ENCODE measurements at regions of chr7 and their contacts with region 1.

Region 1: DNA sequence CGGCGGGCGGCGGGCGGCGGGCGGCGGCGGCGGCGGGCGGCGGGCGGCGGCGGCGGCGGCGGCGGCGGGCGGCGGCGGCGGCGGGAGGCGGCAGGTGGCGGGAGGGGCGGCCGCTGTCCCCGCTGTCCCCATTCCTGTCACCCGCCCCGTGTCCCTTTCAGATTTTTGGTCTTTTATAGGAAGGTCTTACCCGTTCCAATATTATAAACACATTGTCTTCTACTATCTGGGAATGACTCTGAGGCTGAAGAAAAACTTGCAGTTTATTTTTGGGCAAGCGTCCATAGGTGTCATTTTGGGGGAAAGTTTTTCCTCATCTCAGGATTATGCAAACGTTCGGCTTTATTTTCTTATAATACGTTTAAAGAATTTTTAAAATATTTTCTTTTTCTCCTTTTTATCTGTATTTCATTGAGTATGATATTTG is 578 bp downstream of the ZNF713 start:
- H3K4me3 Mint-ChIP-seq: peak overlapping the region; percentile 65
- H3K27ac Mint-ChIP-seq: peak overlapping the region; percentile 58
- H3K4me1 Mint-ChIP-seq: peaks cover 8% of the 10 kb centered on the region
- H3K27me3 Mint-ChIP-seq: peaks cover 2% of the 10 kb centered on the region

Region 2: DNA sequence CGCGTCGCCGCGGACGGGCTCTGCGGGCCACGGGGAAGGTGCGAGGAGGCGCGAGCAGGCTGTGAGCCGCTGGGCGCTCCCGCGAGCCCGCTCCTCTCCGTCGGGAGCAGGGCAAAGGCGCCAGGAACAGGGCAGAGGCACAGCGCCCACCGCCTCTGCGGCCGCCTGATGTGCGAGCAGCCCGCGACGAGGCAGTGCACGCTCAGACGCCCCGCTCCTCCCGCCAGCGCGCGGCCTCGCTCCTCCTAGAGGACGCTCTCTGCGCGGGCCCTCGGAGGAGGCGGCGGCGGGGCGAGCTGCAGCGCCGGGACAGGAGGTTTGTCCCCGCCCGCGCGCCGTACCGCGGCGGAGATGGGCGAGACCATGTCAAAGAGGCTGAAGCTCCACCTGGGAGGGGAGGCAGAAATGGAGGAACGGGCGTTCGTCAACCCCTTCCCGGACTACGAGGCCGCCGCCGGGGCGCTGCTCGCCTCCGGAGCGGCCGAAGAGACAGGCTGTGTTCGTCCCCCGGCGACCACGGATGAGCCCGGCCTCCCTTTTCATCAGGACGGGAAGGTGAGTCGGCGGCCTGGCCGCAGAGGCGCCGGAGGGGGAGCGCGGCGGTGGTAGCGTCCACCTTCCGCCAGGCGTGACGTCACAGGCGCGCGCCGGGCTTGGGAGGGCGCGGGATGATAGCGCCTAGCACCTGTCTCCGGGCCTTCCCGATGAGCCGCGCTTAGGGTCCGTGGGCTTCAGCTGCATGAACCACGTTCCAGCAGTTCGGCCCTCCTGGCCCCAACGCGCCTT is 522.0 kb before region 1 on chr7:
- intact Hi-C with region 1: loop called (anchors 5 kb)
- H3K4me3 Mint-ChIP-seq: peak overlapping the region; percentile 85
- H3K27ac Mint-ChIP-seq: peak overlapping the region; percentile 97
- H3K4me1 Mint-ChIP-seq: peaks cover 42% of the 10 kb centered on the region
- H3K27me3 Mint-ChIP-seq: peaks cover 11% of the 10 kb centered on the region

Region 3: GRCh38 chr7:55951637-55952351 is 64.0 kb after region 1 on chr7 and contains the start of gene MRPS17:
- intact Hi-C with region 1: loop called (anchors 5 kb)
- H3K4me3 Mint-ChIP-seq: peak within 1 kb of the TSS; percentile 98
- H3K27ac Mint-ChIP-seq: peak within 1 kb of the TSS; percentile 96
- H3K4me1 Mint-ChIP-seq: peaks cover 9% of the 10 kb centered on the region
- H3K27me3 Mint-ChIP-seq: peaks cover 3% of the 10 kb centered on the region

Region 4: GRCh38 chr7:55964261-55965099 is 76.6 kb after region 1 on chr7 and contains the start of gene NIPSNAP2:
- intact Hi-C with region 1: loop called (anchors 5 kb)
- H3K4me3 Mint-ChIP-seq: peak within 1 kb of the TSS; percentile 93
- H3K27ac Mint-ChIP-seq: peak within 1 kb of the TSS; percentile 95
- H3K4me1 Mint-ChIP-seq: peaks cover 37% of the 10 kb centered on the region
- H3K27me3 Mint-ChIP-seq: peaks cover 14% of the 10 kb centered on the region

Region 5: GRCh38 chr7:56106108-56107073 is 218.6 kb after region 1 on chr7 and contains the start of gene CHCHD2:
- intact Hi-C with region 1: loop called (anchors 2 kb)
- H3K4me3 Mint-ChIP-seq: peak within 1 kb of the TSS; percentile 98
- H3K27ac Mint-ChIP-seq: peak within 1 kb of the TSS; percentile 97
- H3K4me1 Mint-ChIP-seq: peaks cover 27% of the 10 kb centered on the region
- H3K27me3 Mint-ChIP-seq: peaks cover 10% of the 10 kb centered on the region

Measured in dendritic cell treated with granulocyte-macrophage colony-stimulating factor and Interleukin-4, amounts not matched to agents 40 ng/mL and 50 ng/mL, for 4 days (primary cell).